Activated CD4-positive, alpha-beta memory T cell treated with anti-CD3 and anti-CD28 coated beads for 36 hours (primary cell): ENCODE measurements at regions of chr18 and their contacts with region 1.

Region 1: DNA sequence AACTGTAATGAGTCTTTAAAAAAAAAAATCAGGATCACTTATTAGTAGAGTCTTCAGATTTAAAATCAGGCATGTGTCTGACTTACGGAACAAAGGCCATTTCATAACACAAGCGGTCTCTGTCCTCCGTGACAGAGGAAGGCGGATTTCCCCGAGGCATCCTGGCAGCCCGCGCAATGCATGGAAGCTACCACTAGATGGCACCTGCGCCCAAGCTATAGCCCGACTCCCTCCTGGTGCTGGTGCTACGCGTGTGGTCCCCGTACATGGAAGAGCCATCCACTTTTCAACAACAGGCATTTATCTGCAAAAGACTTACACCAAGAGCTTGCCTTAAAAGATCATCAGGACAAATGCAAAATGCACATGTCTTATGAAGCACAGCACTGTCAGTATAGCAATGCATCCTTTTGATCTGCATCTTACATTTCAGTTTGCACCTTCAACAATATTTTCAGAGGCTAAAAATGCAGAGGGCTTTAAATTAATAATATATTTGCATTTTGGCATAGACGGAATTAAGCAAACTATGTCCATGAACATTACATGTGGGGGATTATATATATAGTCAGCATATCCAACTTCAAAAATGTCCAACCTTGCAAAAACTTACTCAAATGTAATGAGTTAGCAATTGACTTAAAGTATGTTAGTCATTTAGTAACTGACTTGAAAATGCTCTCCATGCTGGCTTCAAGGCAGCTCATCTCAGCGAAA is 96.0 kb downstream of the ZNF516 start:
- DNase-seq: peak; percentile 83
- H3K4me3 Mint-ChIP-seq: no peak overlapping the region
- H3K27ac Mint-ChIP-seq: no peak overlapping the region
- H3K4me1 Mint-ChIP-seq: peaks cover 5% of the 10 kb centered on the region
- H3K27me3 Mint-ChIP-seq: no peaks in the 10 kb centered on the region

Region 2: GRCh38 chr18:76380791-76381405 is 18.2 kb before region 1 on chr18:
- CTCF ChIA-PET with region 1: interaction called, 10 read pairs
- POLR2A ChIA-PET with region 1: no interaction called
- intact Hi-C with region 1: no loop called
- DNase-seq: peak; percentile 23
- H3K4me3 Mint-ChIP-seq: no peak overlapping the region
- H3K27ac Mint-ChIP-seq: no peak overlapping the region
- H3K4me1 Mint-ChIP-seq: peaks cover 18% of the 10 kb centered on the region
- H3K27me3 Mint-ChIP-seq: no peaks in the 10 kb centered on the region

Region 3: GRCh38 chr18:76410660-76411417 is 11.8 kb after region 1 on chr18:
- CTCF ChIA-PET with region 1: interaction called, 15 read pairs
- POLR2A ChIA-PET with region 1: no interaction called
- intact Hi-C with region 1: no loop called
- DNase-seq: peak; percentile 49
- H3K4me3 Mint-ChIP-seq: no peak overlapping the region
- H3K27ac Mint-ChIP-seq: no peak overlapping the region
- H3K4me1 Mint-ChIP-seq: peaks cover 13% of the 10 kb centered on the region
- H3K27me3 Mint-ChIP-seq: peaks cover 10% of the 10 kb centered on the region

Region 4: GRCh38 chr18:76492669-76493212 is 93.7 kb after region 1 on chr18:
- CTCF ChIA-PET with region 1: no interaction called
- POLR2A ChIA-PET with region 1: no interaction called
- intact Hi-C with region 1: loop called (anchors 5 kb)
- DNase-seq: peak; percentile 99
- H3K4me3 Mint-ChIP-seq: peak overlapping the region; percentile 84
- H3K27ac Mint-ChIP-seq: peak overlapping the region; percentile 42
- H3K4me1 Mint-ChIP-seq: peaks cover 33% of the 10 kb centered on the region
- H3K27me3 Mint-ChIP-seq: peaks cover 60% of the 10 kb centered on the region

Region 5: GRCh38 chr18:76658627-76659026 is 259.6 kb after region 1 on chr18:
- CTCF ChIA-PET with region 1: interaction called, 10 read pairs
- POLR2A ChIA-PET with region 1: no interaction called
- intact Hi-C with region 1: no loop called
- DNase-seq: peak; percentile 46
- H3K4me3 Mint-ChIP-seq: no peak overlapping the region
- H3K27ac Mint-ChIP-seq: no peak overlapping the region
- H3K4me1 Mint-ChIP-seq: peaks cover 15% of the 10 kb centered on the region
- H3K27me3 Mint-ChIP-seq: peaks cover 34% of the 10 kb centered on the region

Region 6: GRCh38 chr18:76709659-76710645 is 310.9 kb after region 1 on chr18:
- CTCF ChIA-PET with region 1: interaction called, 174 read pairs
- POLR2A ChIA-PET with region 1: no interaction called
- intact Hi-C with region 1: loop called (anchors 1 kb)
- DNase-seq: peak; percentile 66
- H3K4me3 Mint-ChIP-seq: no peak overlapping the region
- H3K27ac Mint-ChIP-seq: no peak overlapping the region
- H3K4me1 Mint-ChIP-seq: no peaks in the 10 kb centered on the region
- H3K27me3 Mint-ChIP-seq: no peaks in the 10 kb centered on the region